Prostate gland (tissue), 2 donors: ENCODE measurements at regions of chr4 and their contacts with region 1.

Region 1: GRCh38 chr4:157220371-157220881 is at the start of gene GRIA2:
- DNase-seq: no peak
- H3K4me3 ChIP-seq: peak within 1 kb of the TSS in 1 of 2 donors; percentile 21
- H3K27ac ChIP-seq: no peak within 1 kb of the TSS
- H3K4me1 ChIP-seq: no peaks in the 10 kb centered on the region
- H3K27me3 ChIP-seq: peaks cover 14% of the 10 kb centered on the region
- CTCF ChIP-seq: no peak
- POLR2A ChIP-seq: no peak
- total RNA-seq, gene GRIA2: 0.91 to 5.1 TPM

Region 2: DNA sequence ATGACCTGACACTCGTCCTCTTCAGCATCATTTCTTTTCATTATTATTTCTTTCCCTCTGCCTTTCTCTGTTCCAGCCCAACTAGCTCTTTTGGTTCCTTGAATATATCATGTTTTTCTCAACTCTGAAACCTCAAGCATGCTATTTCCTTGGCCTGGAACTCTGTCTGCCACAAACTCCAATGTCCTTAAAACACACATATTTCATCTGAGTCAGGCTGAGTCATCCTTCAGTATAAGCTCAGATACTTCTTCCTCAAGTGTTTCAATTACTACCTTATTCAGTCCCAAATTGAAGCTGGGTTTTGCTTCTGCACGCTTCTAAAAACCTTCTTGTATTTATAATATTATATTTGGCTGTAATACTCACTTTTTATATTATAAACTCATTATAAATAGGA is 673.0 kb before region 1 on chr4:
- intact Hi-C with region 1: no loop called
- DNase-seq: no peak
- H3K4me3 ChIP-seq: no peak overlapping the region
- H3K27ac ChIP-seq: no peak overlapping the region
- H3K4me1 ChIP-seq: no peaks in the 10 kb centered on the region
- H3K27me3 ChIP-seq: no peaks in the 10 kb centered on the region
- CTCF ChIP-seq: no peak
- POLR2A ChIP-seq: no peak

Region 3: GRCh38 chr4:157978680-157979361 is 758.4 kb after region 1 on chr4:
- intact Hi-C with region 1: loop called (anchors 10 kb)
- DNase-seq: peak; percentile 29
- H3K4me3 ChIP-seq: no peak overlapping the region
- H3K27ac ChIP-seq: no peak overlapping the region
- H3K4me1 ChIP-seq: no peaks in the 10 kb centered on the region
- H3K27me3 ChIP-seq: no peaks in the 10 kb centered on the region
- CTCF ChIP-seq: peak; percentile 49 to 70 (median 68)
- POLR2A ChIP-seq: no peak